Activated CD4-positive, alpha-beta memory T cell treated with anti-CD3 and anti-CD28 coated beads for 36 hours (primary cell): ENCODE measurements at regions of chr1 and their contacts with region 1.

Region 1: GRCh38 chr1:43529206-43529731 is 1.4 kb upstream of the PTPRF start:
- DNase-seq: peak; percentile 87
- H3K4me3 Mint-ChIP-seq: no peak overlapping the region
- H3K27ac Mint-ChIP-seq: no peak overlapping the region
- H3K4me1 Mint-ChIP-seq: peaks cover 16% of the 10 kb centered on the region
- H3K27me3 Mint-ChIP-seq: peaks cover 37% of the 10 kb centered on the region

Region 2: GRCh38 chr1:43650310-43651085 is 121.2 kb after region 1 on chr1:
- CTCF ChIA-PET with region 1: interaction called, 3 read pairs
- POLR2A ChIA-PET with region 1: interaction called, 3 read pairs
- intact Hi-C with region 1: loop called (anchors 5 kb)
- DNase-seq: peak; percentile 94
- H3K4me3 Mint-ChIP-seq: peak overlapping the region; percentile 99
- H3K27ac Mint-ChIP-seq: peak overlapping the region; percentile 98
- H3K4me1 Mint-ChIP-seq: peaks cover 30% of the 10 kb centered on the region
- H3K27me3 Mint-ChIP-seq: no peaks in the 10 kb centered on the region

Region 3: GRCh38 chr1:43763497-43763973 is 234.3 kb after region 1 on chr1:
- CTCF ChIA-PET with region 1: interaction called, 12 read pairs
- POLR2A ChIA-PET with region 1: no interaction called
- intact Hi-C with region 1: no loop called
- DNase-seq: peak; percentile 53
- H3K4me3 Mint-ChIP-seq: no peak overlapping the region
- H3K27ac Mint-ChIP-seq: no peak overlapping the region
- H3K4me1 Mint-ChIP-seq: no peaks in the 10 kb centered on the region
- H3K27me3 Mint-ChIP-seq: no peaks in the 10 kb centered on the region